T-cell (primary cell): ENCODE measurements at regions of chr15 and their contacts with region 1.

Region 1: GRCh38 chr15:40444736-40445135 is 4.0 kb downstream of the BAHD1 start:
- DNase-seq: no peak
- ATAC-seq: no peak
- H3K4me3 ChIP-seq: no peak overlapping the region
- H3K4me3 Mint-ChIP-seq: peak overlapping the region in 1 of 3 donors; percentile 28
- H3K27ac ChIP-seq: no peak overlapping the region
- H3K27ac Mint-ChIP-seq: peak overlapping the region in 1 of 2 donors; percentile 58
- H3K4me1 ChIP-seq: peaks cover 5 to 43% of the 10 kb centered on the region in 2 experiments
- H3K4me1 Mint-ChIP-seq: peaks cover 58 to 66% (median 60%) of the 10 kb centered on the region in 3 donors
- H3K27me3 ChIP-seq: peaks cover 0 to 8% of the 10 kb centered on the region in 2 experiments
- H3K27me3 Mint-ChIP-seq: peaks cover 4% of the 10 kb centered on the region in 2 donors

Region 2: GRCh38 chr15:39908186-39908585 is 536.5 kb before region 1 on chr15:
- CTCF ChIA-PET with region 1: no interaction called
- POLR2A ChIA-PET with region 1: interaction called in 1 of 2 experiments, 10 read pairs
- DNase-seq: no peak
- ATAC-seq: no peak
- H3K4me3 ChIP-seq: no peak overlapping the region
- H3K4me3 Mint-ChIP-seq: no peak overlapping the region
- H3K27ac ChIP-seq: no peak overlapping the region
- H3K27ac Mint-ChIP-seq: no peak overlapping the region
- H3K4me1 ChIP-seq: no peaks in the 10 kb centered on the region
- H3K4me1 Mint-ChIP-seq: no peaks in the 10 kb centered on the region
- H3K27me3 ChIP-seq: peaks cover 0 to 5% of the 10 kb centered on the region in 2 experiments
- H3K27me3 Mint-ChIP-seq: peaks cover 11 to 17% of the 10 kb centered on the region in 2 donors